HEK293 (cell line): ENCODE measurements at regions of chr11 and their contacts with region 1.

Region 1: GRCh38 chr11:63838678-63839507 is at the start of gene MARK2:
- H3K4me3 ChIP-seq: peak within 1 kb of the TSS; percentile 81
- H3K27ac ChIP-seq: peak within 1 kb of the TSS; percentile 84
- H3K4me1 ChIP-seq: 0 out of 2 replicates have a peak, but pooled peaks cover 6% of the 10 kb centered on the region
- CTCF ChIP-seq: no peak

Region 2: DNA sequence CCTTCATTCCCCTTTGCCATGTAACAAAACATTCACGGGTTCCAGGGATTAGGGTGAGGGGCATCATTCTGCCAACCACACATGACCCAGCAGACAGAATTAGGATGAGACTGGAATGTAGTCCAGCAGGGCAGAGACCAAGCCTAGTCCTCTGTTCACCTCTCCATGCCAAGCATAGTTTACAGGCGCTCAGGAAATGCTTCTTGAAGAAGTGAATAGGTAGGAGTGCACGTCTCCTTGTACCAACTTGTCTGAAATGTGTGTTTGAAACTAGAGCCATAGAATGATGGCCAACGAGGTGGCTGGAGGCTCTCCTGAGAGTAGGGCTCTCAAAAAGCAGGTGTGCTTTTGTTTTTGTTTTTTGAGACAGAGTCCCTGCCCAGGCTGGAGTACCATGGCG is 17.5 kb before region 1 on chr11:
- CTCF ChIA-PET with region 1: interaction called, 11 read pairs
- POLR2A ChIA-PET with region 1: interaction called, 3 read pairs
- H3K4me3 ChIP-seq: no peak overlapping the region
- H3K27ac ChIP-seq: no peak overlapping the region
- H3K4me1 ChIP-seq: no peaks in the 10 kb centered on the region
- CTCF ChIP-seq: no peak

Region 3: DNA sequence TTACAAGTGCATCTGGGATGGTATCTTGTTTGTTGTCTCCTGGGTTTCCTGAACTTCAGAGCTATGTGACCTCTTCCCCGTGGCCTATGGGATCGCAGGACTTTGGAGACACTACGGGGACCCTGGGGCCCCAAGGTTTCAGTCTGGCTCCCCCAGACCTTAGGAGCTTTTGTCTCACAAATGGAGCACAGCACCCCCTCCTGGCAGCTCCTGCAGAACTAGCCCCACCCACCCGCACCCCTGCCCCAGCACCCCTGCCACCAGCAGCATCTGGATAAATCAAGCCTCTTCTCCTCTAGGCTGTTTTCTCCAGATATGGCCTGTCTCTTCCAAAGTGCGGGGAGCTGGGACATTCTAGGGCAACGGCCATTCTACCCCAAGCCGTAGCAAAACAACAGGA is 67.7 kb after region 1 on chr11:
- CTCF ChIA-PET with region 1: interaction called, 16 read pairs
- POLR2A ChIA-PET with region 1: interaction called, 8 read pairs
- H3K4me3 ChIP-seq: no peak overlapping the region
- H3K27ac ChIP-seq: no peak overlapping the region
- H3K4me1 ChIP-seq: no peaks in the 10 kb centered on the region
- CTCF ChIP-seq: no peak

Region 4: DNA sequence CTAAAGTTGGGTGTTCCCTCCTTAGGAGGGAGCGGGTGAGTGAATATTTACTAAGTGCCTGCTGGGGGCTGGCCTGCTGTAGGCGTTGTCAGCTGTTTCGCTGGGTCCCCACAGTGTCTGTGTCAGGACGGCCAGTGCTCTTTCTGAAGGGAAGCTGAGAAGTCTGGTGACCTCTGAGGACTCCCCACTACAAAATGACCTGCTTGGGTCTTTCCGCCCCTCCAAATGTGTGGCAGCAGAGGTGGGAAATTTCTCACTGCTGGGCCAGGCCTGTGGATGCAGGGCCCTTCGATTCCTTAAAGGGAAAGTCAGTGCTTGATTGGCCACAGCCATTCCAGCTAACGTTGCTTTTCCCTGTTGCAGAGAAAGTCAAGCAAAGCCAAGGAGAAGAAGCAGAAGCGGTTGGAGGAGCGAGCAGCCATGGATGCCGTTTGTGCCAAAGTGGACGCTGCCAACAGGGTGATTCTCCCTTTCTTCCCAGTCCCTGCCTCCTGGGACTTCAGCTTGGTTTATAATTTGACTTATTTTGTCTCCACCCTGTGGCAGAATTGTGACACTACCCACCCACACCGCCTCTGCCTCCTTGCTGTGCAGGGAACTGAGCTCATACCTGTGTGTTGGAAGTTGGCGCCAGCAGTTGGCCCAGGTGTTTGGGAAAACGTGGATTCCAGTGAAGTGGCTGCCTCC is 106.7 kb after region 1 on chr11:
- CTCF ChIA-PET with region 1: interaction called, 135 read pairs
- POLR2A ChIA-PET with region 1: interaction called, 14 read pairs
- H3K4me3 ChIP-seq: no peak overlapping the region
- H3K27ac ChIP-seq: no peak overlapping the region
- H3K4me1 ChIP-seq: no peaks in the 10 kb centered on the region
- CTCF ChIP-seq: peak; percentile 64

Region 5: DNA sequence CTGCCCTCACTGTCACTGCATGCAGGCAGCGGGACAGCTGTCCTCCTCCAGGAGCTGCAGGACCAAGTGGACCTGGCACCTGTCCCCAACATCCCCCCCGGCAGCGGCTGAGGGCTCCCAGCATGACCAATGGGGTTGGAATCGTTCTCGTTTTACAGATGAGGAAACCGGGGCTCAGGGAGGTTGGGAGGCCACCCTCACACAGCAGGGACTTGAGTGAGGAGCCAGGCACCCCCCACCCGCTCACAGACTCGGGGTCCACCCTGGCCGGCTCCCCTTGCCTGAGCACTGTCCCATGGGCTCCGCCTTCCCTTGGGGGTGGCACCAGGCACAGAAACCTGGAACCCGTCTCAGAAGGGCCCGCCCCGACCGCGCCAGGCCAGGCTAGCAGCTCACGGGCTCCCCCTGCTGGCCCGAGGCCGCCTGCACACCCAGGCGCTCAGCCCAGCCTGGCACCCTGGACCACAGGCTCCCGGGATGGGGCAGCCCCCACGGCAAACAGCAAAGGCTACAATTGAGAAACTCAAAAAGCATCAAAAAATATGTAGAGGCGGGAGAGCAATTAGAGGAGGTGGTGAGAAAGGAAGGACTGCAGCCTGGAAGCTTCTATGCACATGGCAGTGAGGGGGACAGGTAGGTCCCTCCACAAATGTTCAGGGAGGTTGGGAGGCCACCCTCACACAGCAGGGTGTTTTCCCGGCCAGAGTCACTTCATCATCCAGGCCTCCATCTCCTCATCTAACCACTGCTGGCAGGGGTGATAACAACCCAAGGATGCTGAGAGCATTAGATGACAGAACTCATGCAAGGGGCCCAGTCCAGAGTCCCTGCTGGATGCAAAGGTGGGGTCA is 314.2 kb after region 1 on chr11:
- CTCF ChIA-PET with region 1: interaction called, 60 read pairs
- POLR2A ChIA-PET with region 1: interaction called, 4 read pairs
- H3K4me3 ChIP-seq: no peak overlapping the region
- H3K27ac ChIP-seq: no peak overlapping the region
- H3K4me1 ChIP-seq: no peaks in the 10 kb centered on the region
- CTCF ChIP-seq: peak; percentile 83